Heart right ventricle (tissue), 16 donors: ENCODE measurements at regions of chr2 and their contacts with region 1.

Region 1: DNA sequence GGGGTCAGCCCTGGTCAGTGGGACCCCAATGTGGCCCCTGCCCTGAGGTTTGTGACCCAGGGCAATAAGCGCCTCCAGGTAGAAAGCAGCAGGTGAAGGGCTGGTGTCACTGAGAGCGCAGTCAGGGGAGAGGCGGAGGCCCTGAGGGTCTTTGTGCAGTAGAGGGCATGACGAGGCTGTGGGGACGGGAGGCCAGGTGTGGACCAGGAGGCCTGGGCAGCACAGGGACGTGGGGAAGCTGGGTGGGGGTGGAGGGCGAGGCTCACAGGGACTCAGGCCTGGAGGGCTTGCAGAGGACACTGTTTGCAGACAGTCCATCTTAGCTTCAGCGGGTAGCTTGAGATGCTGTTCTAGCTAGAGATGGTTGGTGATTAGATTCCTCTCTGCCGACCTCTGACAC is 32.0 kb downstream of the TRAF3IP1 start:
- DNase-seq: no peak
- ATAC-seq: peak in 2 of 8 donors; percentile 13 to 31
- H3K4me3 ChIP-seq: no peak overlapping the region
- H3K27ac ChIP-seq: no peak overlapping the region
- H3K4me1 ChIP-seq: peaks cover 0 to 4% (median 0%) of the 10 kb centered on the region in 9 donors
- H3K27me3 ChIP-seq: no peaks in the 10 kb centered on the region
- CTCF ChIP-seq: no peak

Region 2: GRCh38 chr2:237931205-237931721 is 421.1 kb before region 1 on chr2:
- intact Hi-C with region 1: no loop called
- DNase-seq: no peak
- ATAC-seq: peak in 5 of 8 donors; percentile 18 to 31 (median 29)
- H3K4me3 ChIP-seq: no peak overlapping the region
- H3K27ac ChIP-seq: no peak overlapping the region
- H3K4me1 ChIP-seq: peaks cover 0 to 10% (median 0%) of the 10 kb centered on the region in 9 donors
- H3K27me3 ChIP-seq: no peaks in the 10 kb centered on the region
- CTCF ChIP-seq: no peak

Region 3: GRCh38 chr2:238504181-238504931 is 152.0 kb after region 1 on chr2:
- intact Hi-C with region 1: no loop called
- DNase-seq: no peak
- ATAC-seq: no peak
- H3K4me3 ChIP-seq: no peak overlapping the region
- H3K27ac ChIP-seq: no peak overlapping the region
- H3K4me1 ChIP-seq: no peaks in the 10 kb centered on the region
- H3K27me3 ChIP-seq: peaks cover 0 to 17% (median 4%) of the 10 kb centered on the region in 7 donors
- CTCF ChIP-seq: no peak

Region 4: DNA sequence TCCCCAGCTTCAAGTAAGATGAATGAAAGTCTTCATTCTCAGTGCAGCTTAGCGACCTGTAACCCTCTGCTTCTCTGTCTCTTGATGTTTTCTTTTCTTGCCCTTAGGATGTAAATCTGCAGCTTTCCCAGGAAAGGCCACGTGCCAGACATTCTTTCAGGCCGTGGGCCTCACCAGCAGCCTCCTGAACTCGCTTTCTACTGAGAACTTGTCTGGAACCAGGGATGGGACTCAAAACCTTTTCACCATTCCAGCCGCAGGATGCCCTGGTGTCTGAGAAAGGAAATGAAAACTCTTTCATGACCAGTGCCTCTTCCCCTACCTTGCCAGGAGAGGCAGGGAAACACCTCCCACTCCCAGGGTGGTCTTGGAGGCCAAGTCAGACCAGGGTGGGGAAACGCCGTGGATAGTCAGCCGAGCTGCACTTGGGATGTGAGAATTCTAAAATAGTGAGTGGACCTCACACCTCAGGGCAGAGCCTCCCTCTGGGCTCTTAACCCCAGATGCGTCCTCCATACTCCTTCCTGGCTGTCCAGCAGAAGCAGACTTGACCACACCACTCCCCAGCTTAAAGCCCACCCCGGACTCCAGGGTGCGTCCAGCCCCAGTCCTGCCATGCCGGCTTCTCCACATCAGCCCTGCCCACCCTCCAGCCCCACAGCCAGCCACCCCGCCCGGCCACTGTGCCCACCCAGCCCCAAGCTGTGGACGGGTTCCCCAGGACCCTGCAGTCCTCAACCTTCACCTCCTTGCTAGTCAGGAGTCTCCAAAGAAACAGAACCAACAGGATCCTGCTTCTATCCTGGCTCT is 611.0 kb after region 1 on chr2:
- intact Hi-C with region 1: loop called in 1 of 10 experiments (anchors 10 kb)
- DNase-seq: no peak
- ATAC-seq: no peak
- H3K4me3 ChIP-seq: no peak overlapping the region
- H3K27ac ChIP-seq: no peak overlapping the region
- H3K4me1 ChIP-seq: no peaks in the 10 kb centered on the region
- H3K27me3 ChIP-seq: peaks cover 0 to 25% (median 4%) of the 10 kb centered on the region in 7 donors
- CTCF ChIP-seq: no peak

Region 5: DNA sequence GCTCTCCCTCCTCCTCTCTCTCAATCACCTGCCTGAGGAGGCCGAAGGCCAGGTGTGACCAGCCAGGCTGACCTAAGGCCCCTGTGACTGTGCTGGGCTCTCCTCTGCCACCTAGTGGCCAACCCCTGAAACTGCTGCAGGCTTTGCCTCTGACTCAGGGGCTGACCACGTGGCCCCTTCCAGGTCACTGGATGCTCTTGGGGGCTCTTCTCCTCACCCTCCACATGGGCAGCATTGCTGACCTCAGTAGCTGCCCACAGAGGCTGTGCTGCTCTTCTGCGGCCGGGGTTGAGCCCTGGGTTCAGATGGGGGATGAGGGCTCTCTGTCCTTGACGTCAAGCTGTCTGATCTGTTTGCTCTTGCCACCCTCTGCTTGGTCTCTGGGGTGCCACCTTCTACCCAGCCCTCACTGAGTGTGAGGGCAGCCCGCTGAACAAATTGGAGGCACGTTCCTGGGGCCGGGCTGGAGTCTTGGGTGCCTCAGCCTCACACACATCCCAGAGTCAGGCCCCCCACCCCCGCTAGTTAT is 618.3 kb after region 1 on chr2:
- intact Hi-C with region 1: loop called in 2 of 10 experiments (anchors 10 kb)
- DNase-seq: peak; percentile 37 to 51
- ATAC-seq: peak; percentile 54 to 81 (median 74)
- H3K4me3 ChIP-seq: no peak overlapping the region
- H3K27ac ChIP-seq: no peak overlapping the region
- H3K4me1 ChIP-seq: peaks cover 0 to 3% (median 0%) of the 10 kb centered on the region in 9 donors
- H3K27me3 ChIP-seq: peaks cover 0 to 35% (median 11%) of the 10 kb centered on the region in 7 donors
- CTCF ChIP-seq: peak in 8 of 9 donors; percentile 93 to 99 (median 98)